ENCODE measurements at regions of chr3 and their contacts with region 1.

Region 1: DNA sequence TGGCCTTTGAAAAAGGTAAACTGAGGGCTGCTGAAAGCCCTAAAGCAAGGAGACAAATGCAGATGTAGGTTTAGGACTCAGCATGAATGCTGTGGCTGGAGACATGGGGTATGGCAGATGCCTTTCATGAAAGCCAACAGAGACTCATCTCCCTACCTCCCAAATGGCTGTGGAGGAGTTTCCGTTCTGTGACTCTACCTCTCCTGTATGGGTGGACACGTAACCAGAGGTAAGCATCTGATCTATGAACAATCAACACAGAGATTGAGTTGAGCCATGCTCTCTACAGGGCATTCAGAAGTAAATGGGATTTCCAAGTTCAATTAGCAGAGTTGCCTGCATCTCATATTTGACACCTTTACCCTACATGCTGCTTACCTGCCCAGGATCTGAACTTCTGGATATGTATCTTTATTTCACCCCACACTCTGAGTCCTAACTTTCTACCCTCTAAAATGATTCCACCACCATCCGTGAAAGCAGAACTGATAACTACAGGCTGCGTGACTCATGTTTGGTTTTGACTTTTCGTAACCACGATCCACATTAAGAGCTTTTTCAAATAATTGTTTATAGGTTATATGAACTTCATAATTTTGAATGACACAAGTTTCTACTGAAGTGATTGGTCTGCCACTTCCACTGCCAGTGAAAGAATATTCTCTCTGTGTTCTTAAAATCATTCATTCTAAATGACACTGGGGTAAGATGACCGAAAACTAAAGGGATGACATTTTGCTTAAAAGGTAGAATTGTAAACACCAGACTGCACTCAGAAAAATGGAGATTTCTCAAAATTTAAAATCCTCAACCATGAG is 1058.7 kb downstream of the FHIT start:
- DNase-seq: no peak
- H3K4me3 Mint-ChIP-seq: peak overlapping the region; percentile 14
- H3K27ac Mint-ChIP-seq: peak overlapping the region; percentile 86
- H3K4me1 Mint-ChIP-seq: peaks cover 52% of the 10 kb centered on the region
- H3K27me3 Mint-ChIP-seq: no peaks in the 10 kb centered on the region

Region 2: GRCh38 chr3:59759298-59760031 is 433.0 kb before region 1 on chr3:
- intact Hi-C with region 1: loop called (anchors 5 kb)
- DNase-seq: no peak
- H3K4me3 Mint-ChIP-seq: no peak overlapping the region
- H3K27ac Mint-ChIP-seq: peak overlapping the region; percentile 9
- H3K4me1 Mint-ChIP-seq: peaks cover 71% of the 10 kb centered on the region
- H3K27me3 Mint-ChIP-seq: no peaks in the 10 kb centered on the region

Region 3: GRCh38 chr3:59935025-59935424 is 257.5 kb before region 1 on chr3:
- intact Hi-C with region 1: loop called (anchors 2 kb)
- DNase-seq: no peak
- H3K4me3 Mint-ChIP-seq: no peak overlapping the region
- H3K27ac Mint-ChIP-seq: peak overlapping the region; percentile 69
- H3K4me1 Mint-ChIP-seq: peaks cover 38% of the 10 kb centered on the region
- H3K27me3 Mint-ChIP-seq: no peaks in the 10 kb centered on the region

Region 4: GRCh38 chr3:59992578-59992977 is 199.9 kb before region 1 on chr3:
- intact Hi-C with region 1: loop called (anchors 5 kb)
- DNase-seq: no peak
- H3K4me3 Mint-ChIP-seq: no peak overlapping the region
- H3K27ac Mint-ChIP-seq: no peak overlapping the region
- H3K4me1 Mint-ChIP-seq: peaks cover 56% of the 10 kb centered on the region
- H3K27me3 Mint-ChIP-seq: no peaks in the 10 kb centered on the region

Region 5: DNA sequence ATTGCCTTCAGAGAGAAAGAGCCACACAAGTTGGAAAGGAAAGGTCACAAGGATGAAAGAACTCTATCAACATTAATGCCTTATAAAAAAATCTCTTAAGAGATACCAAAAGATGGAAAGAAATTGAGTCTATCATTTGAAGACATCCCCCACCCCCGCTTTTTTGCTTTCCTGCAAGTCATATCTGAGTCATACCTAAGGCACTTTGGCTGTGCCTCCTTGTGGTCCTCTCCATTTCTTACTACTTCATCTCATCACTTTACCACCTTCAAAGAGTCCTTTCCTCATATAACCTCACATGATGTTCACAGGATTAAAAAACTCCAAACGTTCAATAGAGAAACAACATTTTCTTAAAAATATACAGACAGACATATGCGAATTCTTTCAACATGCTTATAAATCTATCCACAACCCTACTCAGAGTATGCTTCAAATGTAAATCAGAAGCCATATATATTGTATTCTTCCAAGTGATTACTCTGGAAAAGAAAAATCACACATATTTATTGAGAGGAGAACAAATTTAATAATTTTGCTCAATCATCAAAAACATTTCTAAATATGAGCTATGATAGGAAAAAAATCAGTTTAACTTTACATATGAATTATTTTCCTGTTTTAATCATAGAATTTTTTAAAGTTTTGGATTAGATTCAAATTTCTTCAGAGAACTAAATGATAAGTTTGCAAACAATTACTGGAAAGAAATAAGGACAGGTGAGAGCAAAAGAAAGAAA is 138.8 kb before region 1 on chr3:
- intact Hi-C with region 1: loop called (anchors 1 kb)
- DNase-seq: no peak
- H3K4me3 Mint-ChIP-seq: peak overlapping the region; percentile 35
- H3K27ac Mint-ChIP-seq: peak overlapping the region; percentile 89
- H3K4me1 Mint-ChIP-seq: peaks cover 79% of the 10 kb centered on the region
- H3K27me3 Mint-ChIP-seq: no peaks in the 10 kb centered on the region

Region 6: DNA sequence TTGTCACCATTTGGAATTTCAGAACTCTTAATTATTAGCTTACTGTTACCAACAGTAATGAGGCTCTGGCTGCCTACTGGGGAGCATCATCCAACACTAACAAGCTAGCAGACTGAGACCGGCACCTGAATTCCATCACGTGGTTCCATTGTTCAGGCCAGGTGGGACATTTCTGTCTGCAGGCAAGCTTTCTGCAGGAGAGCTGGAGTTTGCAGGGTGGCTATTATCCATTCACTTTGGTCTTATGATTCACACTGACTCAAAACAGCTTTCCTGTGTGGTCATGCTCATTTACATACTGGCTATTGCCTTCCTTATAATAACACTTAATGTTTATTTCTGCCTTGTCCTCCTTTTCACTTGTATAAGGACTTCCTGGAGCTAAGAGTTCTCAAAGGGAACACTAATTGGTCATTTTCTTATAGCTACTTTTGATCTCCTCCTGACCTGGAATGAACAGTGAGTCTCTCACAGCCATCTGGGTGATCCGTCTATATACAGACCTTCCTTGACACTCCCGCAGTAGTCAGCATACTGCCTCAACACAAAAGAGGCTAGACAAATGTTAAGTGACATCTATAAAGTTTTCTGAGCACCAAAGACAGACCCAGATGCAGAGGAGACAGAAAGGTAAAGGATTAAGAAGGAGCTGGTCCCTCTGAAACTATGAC is 363.3 kb after region 1 on chr3:
- intact Hi-C with region 1: loop called (anchors 2 kb)
- DNase-seq: no peak
- H3K4me3 Mint-ChIP-seq: no peak overlapping the region
- H3K27ac Mint-ChIP-seq: no peak overlapping the region
- H3K4me1 Mint-ChIP-seq: peaks cover 34% of the 10 kb centered on the region
- H3K27me3 Mint-ChIP-seq: no peaks in the 10 kb centered on the region

Region 7: GRCh38 chr3:61520966-61521628 is 1328.6 kb after region 1 on chr3:
- intact Hi-C with region 1: loop called (anchors 1 kb)
- DNase-seq: peak; percentile 37
- H3K4me3 Mint-ChIP-seq: peak overlapping the region; percentile 42
- H3K27ac Mint-ChIP-seq: peak overlapping the region; percentile 87
- H3K4me1 Mint-ChIP-seq: peaks cover 41% of the 10 kb centered on the region
- H3K27me3 Mint-ChIP-seq: no peaks in the 10 kb centered on the region